Activated T-helper 1 cell treated with anti-CD3 and anti-CD28 coated beads, Interleukin-12 subunit alpha, Interleukin-12 subunit beta, Interleukin-2, Interleukin-4 antibody, amounts not matched to agents 30 ng/mL and 10 ng/mL and 1 ng/mL, durations not matched to agents 14 hours and 24 hours and 36 hours (primary cell): ENCODE measurements at regions of chr2 and their contacts with region 1.

Region 1: GRCh38 chr2:241315093-241315878 is at the start of gene HDLBP:
- DNase-seq: peak; percentile 100
- H3K4me3 Mint-ChIP-seq: peak within 1 kb of the TSS; percentile 100
- H3K27ac Mint-ChIP-seq: peak within 1 kb of the TSS; percentile 100
- H3K4me1 Mint-ChIP-seq: peaks cover 74% of the 10 kb centered on the region
- H3K27me3 Mint-ChIP-seq: peaks cover 2% of the 10 kb centered on the region
- total RNA-seq, gene HDLBP: 270 and 273 TPM in 2 replicates

Region 2: DNA sequence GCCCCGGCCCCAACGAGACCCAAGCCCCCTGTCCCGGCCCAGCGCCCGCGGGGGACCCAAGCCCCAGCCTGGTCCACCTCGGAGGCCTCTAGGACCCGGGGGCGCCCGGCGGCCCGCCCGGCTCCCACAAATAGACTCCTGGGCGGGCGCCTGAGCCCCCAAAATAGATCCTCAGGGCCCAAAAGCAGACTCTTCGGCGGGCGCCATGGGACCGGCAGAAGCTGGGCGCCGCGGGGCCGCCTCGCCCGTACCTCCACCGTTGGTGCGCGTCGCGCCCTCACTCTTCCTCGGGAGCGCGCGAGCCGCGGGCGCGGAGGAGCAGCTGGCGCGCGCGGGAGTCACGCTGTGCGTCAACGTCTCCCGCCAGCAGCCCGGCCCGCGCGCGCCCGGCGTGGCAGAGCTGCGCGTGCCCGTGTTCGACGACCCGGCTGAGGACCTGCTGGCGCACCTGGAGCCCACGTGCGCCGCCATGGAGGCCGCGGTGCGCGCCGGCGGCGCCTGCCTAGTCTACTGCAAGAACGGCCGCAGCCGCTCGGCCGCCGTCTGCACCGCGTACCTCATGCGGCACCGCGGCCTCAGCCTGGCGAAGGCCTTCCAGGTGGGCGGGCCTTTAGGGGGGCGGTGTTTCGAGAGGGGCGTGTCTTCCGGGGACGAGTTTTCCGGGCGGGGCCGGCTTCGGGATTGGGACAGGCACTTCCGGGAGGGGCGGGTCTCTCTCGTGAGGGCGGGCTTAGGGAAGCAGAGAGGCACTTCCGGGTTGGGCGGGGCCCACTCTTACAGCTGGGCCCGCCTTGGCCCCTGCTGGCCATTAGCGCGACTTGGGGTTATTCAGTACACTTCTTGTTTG is 754.6 kb before region 1 on chr2:
- intact Hi-C with region 1: loop called (anchors 1 kb)
- DNase-seq: peak; percentile 99
- H3K4me3 Mint-ChIP-seq: peak overlapping the region; percentile 90
- H3K27ac Mint-ChIP-seq: peak overlapping the region; percentile 95
- H3K4me1 Mint-ChIP-seq: peaks cover 75% of the 10 kb centered on the region
- H3K27me3 Mint-ChIP-seq: no peaks in the 10 kb centered on the region

Region 3: GRCh38 chr2:241149925-241150659 is 165.2 kb before region 1 on chr2 and contains the start of gene PPP1R7:
- intact Hi-C with region 1: loop called (anchors 1 kb)
- DNase-seq: peak; percentile 91
- H3K4me3 Mint-ChIP-seq: peak within 1 kb of the TSS; percentile 95
- H3K27ac Mint-ChIP-seq: peak within 1 kb of the TSS; percentile 95
- H3K4me1 Mint-ChIP-seq: peaks cover 61% of the 10 kb centered on the region
- H3K27me3 Mint-ChIP-seq: no peaks in the 10 kb centered on the region
- total RNA-seq, gene PPP1R7: 115 and 118 TPM in 2 replicates

Region 4: DNA sequence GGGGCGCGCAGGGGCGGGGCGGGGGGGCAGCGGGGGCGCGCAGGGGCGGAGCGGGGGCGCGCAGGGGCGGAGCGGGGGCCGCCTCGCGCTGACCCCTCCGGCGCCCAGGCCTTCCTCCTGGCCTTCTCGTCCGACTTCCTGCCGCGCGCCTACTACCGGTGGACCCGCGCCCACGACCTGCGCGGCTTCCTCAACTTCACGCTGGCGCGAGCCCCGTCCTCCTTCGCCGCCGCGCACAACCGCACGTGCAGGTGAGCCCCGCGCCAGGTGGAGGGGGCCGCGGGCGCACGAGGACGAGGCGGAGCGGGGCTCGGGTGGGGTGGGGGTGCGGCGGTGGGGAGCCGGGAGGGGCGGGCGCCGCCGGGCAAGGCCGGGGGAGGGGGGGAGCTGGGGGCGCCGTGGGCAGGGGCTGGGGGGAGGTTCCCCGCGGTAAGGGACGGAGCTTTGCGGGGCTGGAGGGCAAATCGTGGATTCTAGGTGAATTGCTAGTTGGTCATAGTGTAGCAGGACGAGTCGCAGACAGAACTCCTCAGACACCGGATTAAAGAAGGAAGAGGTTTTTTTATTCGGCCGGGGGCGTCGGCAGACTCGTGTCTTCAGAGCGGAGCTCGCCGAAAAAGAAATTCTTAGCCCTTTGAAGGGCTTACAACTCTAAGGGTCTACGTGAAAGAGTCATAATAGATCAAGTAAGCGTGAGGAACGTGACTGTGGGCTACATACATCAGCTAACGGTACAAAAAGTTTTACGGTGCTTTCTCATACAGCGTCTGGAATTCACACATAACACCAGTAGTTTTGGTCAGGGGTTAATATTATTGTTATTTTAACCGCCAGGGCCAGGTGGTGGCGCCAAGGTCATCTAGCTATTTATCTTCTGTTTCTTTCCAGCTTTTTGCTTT is 96.9 kb before region 1 on chr2:
- intact Hi-C with region 1: no loop called
- DNase-seq: peak; percentile 37
- H3K4me3 Mint-ChIP-seq: peak overlapping the region; percentile 86
- H3K27ac Mint-ChIP-seq: peak overlapping the region; percentile 65
- H3K4me1 Mint-ChIP-seq: peaks cover 18% of the 10 kb centered on the region
- H3K27me3 Mint-ChIP-seq: peaks cover 21% of the 10 kb centered on the region

Region 5: GRCh38 chr2:241355983-241356870 is 40.9 kb after region 1 on chr2 and contains the start of gene FARP2:
- intact Hi-C with region 1: loop called (anchors 1 kb)
- DNase-seq: peak; percentile 95
- H3K4me3 Mint-ChIP-seq: peak within 1 kb of the TSS; percentile 84
- H3K27ac Mint-ChIP-seq: peak within 1 kb of the TSS; percentile 83
- H3K4me1 Mint-ChIP-seq: peaks cover 22% of the 10 kb centered on the region
- H3K27me3 Mint-ChIP-seq: peaks cover 2% of the 10 kb centered on the region
- total RNA-seq, gene FARP2: 36.6 and 40.9 TPM in 2 replicates

Region 6: DNA sequence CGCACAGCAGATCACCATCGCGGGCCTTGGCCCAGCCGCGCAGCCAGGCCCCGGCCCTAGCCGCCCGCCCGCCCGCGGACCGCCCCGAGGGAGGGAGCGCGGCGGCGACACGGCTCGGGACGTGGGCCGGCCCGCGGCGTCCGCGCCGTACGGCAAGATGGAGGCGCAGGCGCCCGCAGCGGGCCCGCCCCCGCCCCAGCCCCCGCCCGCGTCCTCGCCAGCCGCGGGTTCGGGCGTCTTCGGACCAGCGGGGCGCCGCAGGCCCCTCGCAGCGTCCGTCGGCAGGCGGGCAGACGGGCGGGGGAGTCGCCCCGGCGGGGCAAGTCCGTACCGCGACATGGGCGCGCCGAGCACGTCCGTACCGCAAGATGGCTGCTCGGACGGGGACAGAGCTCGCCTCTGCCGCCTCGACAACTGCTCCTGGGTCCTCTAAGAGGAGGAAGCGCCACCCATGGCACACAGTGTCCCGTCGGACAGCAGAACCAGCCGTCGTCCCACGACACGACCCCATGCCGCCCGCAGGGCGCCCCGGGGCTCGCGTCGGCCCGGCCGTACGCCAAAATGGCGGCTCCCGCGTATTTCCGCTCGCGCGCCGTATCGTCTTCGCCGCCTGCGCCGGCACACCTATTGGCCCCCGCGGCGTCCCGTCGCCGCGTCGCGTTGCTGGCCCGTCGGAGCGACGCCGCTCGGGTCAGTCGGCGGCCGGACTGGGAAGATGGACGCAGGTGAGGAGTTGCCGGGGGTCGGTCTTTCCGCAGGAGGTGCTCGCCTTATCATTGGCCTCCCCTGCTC is 321.9 kb after region 1 on chr2 and contains the starts of genes ATG4B and THAP4:
- intact Hi-C with region 1: loop called (anchors 1 kb)
- DNase-seq: peak; percentile 78
- H3K4me3 Mint-ChIP-seq: peak within 1 kb of the TSS; percentile 93
- H3K27ac Mint-ChIP-seq: peak within 1 kb of the TSS; percentile 93
- H3K4me1 Mint-ChIP-seq: peaks cover 44% of the 10 kb centered on the region
- H3K27me3 Mint-ChIP-seq: no peaks in the 10 kb centered on the region
- total RNA-seq, gene ATG4B: 116 and 126 TPM in 2 replicates
- total RNA-seq, gene THAP4: 53.1 and 58.5 TPM in 2 replicates

Region 7: GRCh38 chr2:241734467-241735208 is 419.4 kb after region 1 on chr2 and contains the start of gene D2HGDH:
- intact Hi-C with region 1: loop called (anchors 1 kb)
- DNase-seq: peak; percentile 89
- H3K4me3 Mint-ChIP-seq: peak within 1 kb of the TSS; percentile 82
- H3K27ac Mint-ChIP-seq: no peak within 1 kb of the TSS
- H3K4me1 Mint-ChIP-seq: peaks cover 41% of the 10 kb centered on the region
- H3K27me3 Mint-ChIP-seq: peaks cover 3% of the 10 kb centered on the region
- total RNA-seq, gene D2HGDH: 27.1 and 28.7 TPM in 2 replicates